ENCODE measurements at regions of chr3 and their contacts with region 1.

Region 1: DNA sequence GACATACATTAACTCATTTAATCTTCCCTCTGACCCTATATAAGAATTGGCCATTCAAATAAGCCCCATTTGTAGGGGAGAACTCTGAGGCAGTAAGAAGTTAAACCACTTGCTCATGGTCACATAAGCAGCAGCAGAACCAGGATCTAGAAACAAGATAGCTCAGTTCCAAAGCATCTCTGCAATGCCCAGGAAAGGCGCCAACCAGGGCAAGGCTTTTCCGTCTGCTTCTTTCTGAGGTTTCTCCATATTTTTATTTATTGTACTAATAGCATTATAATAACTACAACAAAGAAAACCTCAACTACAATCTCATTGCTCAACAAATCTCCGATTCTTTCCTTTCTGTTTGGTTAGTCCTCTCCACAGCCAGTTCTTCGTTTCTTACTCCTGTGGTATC is 4.3 kb upstream of the UBE2E2 start:
- DNase-seq: peak in 1 of 5 donors; percentile 16
- H3K4me3 ChIP-seq: no peak overlapping the region
- H3K27ac ChIP-seq: no peak overlapping the region
- H3K4me1 ChIP-seq: peaks cover 2% of the 10 kb centered on the region
- H3K27me3 ChIP-seq: no peaks in the 10 kb centered on the region
- CTCF ChIP-seq: no peak
- EP300 ChIP-seq: no peak
- POLR2A ChIP-seq: no peak

Region 2: DNA sequence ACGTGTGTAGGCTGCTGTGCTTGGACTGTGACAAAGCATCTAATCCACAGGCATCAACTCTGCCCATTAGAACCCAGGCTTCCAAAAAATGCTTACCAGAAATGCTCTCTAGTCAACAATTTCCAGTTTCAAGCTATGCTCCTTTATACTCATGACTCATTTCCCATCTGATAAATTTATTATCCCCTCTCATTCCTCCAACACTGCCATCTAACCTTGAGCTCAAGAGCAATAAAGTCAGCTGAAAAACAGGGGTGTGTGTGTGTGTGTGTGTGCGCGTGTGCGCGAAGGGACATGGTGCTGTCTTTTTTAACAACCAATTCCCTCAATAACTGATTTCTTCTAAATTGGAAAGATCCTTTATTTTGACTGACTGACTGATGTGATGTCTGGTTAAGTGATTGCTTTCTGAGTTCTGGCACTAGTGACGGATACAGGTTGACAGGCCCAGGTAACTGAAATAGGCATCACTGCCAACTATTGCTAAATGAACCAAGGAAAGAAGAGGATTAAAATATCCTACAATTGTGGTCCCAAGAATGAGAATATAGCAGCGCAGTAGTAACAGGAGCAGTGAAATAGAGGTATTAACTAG is 1853.3 kb before region 1 on chr3:
- intact Hi-C with region 1: loop called in 1 of 4 experiments (anchors 5 kb)
- DNase-seq: no peak
- H3K4me3 ChIP-seq: no peak overlapping the region
- H3K27ac ChIP-seq: no peak overlapping the region
- H3K4me1 ChIP-seq: no peaks in the 10 kb centered on the region
- H3K27me3 ChIP-seq: no peaks in the 10 kb centered on the region
- CTCF ChIP-seq: no peak
- EP300 ChIP-seq: no peak
- POLR2A ChIP-seq: no peak

Region 3: DNA sequence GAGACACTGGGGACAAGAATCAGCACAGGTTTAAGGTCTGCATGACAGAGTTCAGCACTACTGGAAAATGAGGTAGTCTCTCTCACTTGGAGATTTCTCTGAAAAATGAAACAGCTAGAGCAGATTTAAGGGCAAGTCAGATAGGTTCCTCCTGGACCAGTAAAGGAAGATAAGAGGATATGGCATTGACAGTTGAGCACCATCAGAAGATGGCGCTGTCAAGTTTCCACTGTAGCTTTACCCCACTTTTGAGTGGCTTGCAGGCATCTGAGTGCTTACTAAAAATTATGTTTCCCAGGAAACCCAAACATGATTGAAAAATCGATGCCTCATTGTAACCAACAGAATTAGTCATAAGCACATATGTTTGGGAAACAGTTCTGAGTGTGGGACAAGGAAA is 402.9 kb before region 1 on chr3:
- intact Hi-C with region 1: no loop called
- DNase-seq: no peak
- H3K4me3 ChIP-seq: no peak overlapping the region
- H3K27ac ChIP-seq: no peak overlapping the region
- H3K4me1 ChIP-seq: no peaks in the 10 kb centered on the region
- H3K27me3 ChIP-seq: no peaks in the 10 kb centered on the region
- CTCF ChIP-seq: no peak
- EP300 ChIP-seq: no peak
- POLR2A ChIP-seq: no peak

Region 4: DNA sequence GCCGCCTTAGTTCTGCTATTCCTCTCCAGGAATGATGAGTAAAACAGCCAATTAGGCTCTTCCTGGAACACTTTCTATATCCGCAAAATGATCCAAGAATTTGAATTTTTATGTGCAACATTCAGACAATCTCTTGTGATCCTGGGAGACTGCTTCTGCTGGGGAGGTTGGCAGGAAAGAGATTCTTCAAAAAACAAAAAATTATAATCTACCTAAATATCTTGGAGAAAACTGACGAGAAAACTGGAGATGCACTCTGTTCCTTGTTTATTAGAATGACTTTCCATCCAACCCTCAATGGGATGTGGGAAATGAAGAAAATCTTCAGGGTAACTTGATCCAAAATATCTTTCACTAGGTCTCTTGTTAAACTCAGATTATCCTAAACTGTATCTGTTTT is 342.0 kb before region 1 on chr3:
- intact Hi-C with region 1: no loop called
- DNase-seq: no peak
- H3K4me3 ChIP-seq: no peak overlapping the region
- H3K27ac ChIP-seq: no peak overlapping the region
- H3K4me1 ChIP-seq: peaks cover 6% of the 10 kb centered on the region
- H3K27me3 ChIP-seq: no peaks in the 10 kb centered on the region
- CTCF ChIP-seq: no peak
- EP300 ChIP-seq: no peak
- POLR2A ChIP-seq: no peak